Vagina (tissue), 2 donors: ENCODE measurements at regions of chr1 and their contacts with region 1.

Region 1: GRCh38 chr1:31302709-31303441 is 6.0 kb downstream of the ZCCHC17 start:
- DNase-seq: no peak
- H3K4me3 ChIP-seq: no peak overlapping the region
- H3K27ac ChIP-seq: no peak overlapping the region
- H3K4me1 ChIP-seq: peaks cover 8% of the 10 kb centered on the region
- H3K27me3 ChIP-seq: no peaks in the 10 kb centered on the region
- CTCF ChIP-seq: no peak
- POLR2A ChIP-seq: no peak

Region 2: GRCh38 chr1:31111290-31111977 is 191.4 kb before region 1 on chr1:
- intact Hi-C with region 1: no loop called
- DNase-seq: no peak
- H3K4me3 ChIP-seq: no peak overlapping the region
- H3K27ac ChIP-seq: no peak overlapping the region
- H3K4me1 ChIP-seq: no peaks in the 10 kb centered on the region
- H3K27me3 ChIP-seq: no peaks in the 10 kb centered on the region
- CTCF ChIP-seq: no peak
- POLR2A ChIP-seq: no peak

Region 3: DNA sequence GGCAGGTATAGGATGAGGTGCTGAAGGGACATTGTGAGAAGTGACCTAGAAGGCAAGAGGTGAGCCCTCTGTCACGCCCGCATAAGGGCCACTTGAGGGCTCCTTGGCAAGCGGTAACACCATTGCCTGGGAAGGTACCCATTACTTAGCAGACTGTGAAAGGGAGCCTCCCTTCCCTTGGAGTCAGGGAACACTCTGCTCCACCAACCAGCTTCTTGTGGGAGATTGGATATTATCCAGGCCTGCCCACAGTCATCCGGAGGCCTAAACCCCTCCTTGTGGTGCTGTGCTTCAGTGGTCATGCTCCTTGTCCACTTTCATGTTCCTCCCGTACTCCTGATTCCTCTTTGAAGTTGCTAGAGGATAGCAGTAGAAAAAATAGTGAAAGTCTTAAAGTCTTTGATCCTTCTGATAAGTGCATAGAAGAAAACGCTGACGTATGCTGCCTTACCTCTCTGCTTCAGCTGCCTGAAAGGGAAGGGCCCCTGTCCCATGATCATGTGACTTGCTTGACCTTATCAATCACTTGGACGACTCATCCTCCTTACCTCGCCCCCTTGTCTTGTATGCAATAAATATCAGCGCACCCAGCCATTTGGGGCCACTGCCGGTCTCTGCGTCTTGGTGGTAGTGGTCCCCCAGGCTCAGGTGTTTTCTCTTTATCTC is 1364.2 kb after region 1 on chr1:
- intact Hi-C with region 1: loop called (anchors 5 kb)
- DNase-seq: no peak
- H3K4me3 ChIP-seq: no peak overlapping the region
- H3K27ac ChIP-seq: no peak overlapping the region
- H3K4me1 ChIP-seq: no peaks in the 10 kb centered on the region
- H3K27me3 ChIP-seq: no peaks in the 10 kb centered on the region
- CTCF ChIP-seq: no peak
- POLR2A ChIP-seq: no peak